Naive thymus-derived CD4-positive, alpha-beta T cell (primary cell): ENCODE measurements at regions of chr10 and their contacts with region 1.

Region 1: GRCh38 chr10:4656576-4657182 is 169.3 kb upstream of the AKR1E2 start:
- DNase-seq: peak in 8 of 9 donors; percentile 16 to 50 (median 36)
- ATAC-seq: no peak
- H3K4me3 ChIP-seq: no peak overlapping the region
- H3K4me3 Mint-ChIP-seq: no peak overlapping the region
- H3K27ac ChIP-seq: no peak overlapping the region
- H3K27ac Mint-ChIP-seq: no peak overlapping the region
- H3K4me1 ChIP-seq: no peaks in the 10 kb centered on the region
- H3K4me1 Mint-ChIP-seq: peaks cover 0 to 11% (median 0%) of the 10 kb centered on the region in 7 donors
- H3K27me3 ChIP-seq: no peaks in the 10 kb centered on the region
- H3K27me3 Mint-ChIP-seq: peaks cover 4 to 30% (median 8%) of the 10 kb centered on the region in 5 donors

Region 2: DNA sequence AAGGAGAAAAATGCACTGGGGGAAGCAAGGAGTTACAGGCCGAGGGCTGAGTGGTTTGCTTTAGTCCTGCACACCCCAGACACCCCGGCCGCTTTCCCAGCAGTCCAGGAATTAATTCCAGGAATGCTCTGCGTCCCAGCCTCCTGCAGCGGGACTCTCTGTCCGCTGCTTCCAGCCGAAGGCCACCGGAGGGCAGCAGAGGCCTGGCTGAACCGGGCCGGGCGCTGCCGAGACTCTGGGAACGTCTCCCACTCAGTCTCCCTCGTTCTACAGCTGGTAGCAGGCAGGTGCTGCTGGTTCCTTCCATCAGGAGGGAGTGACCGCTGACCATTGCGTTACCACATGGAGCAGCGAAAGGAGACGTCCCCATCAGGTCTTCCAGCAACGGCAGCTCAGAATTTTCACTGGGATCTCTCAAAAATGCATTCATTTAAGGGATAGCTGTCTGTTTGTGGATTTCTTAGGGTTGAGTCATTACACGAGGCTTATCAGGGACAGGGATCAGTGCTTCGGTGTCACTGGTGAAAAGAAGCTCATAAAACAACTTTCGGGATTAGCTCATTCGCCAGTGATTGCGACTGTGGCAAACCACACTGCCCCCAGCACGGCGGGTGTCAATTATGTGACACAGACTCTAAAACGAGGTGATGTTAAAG is 1459.2 kb before region 1 on chr10:
- CTCF ChIA-PET with region 1: interaction called, 9 read pairs
- POLR2A ChIA-PET with region 1: no interaction called
- intact Hi-C with region 1: loop called (anchors 1 to 2 kb)
- DNase-seq: peak in 5 of 9 donors; percentile 25 to 82 (median 29)
- ATAC-seq: peak; percentile 72
- H3K4me3 ChIP-seq: peak overlapping the region; percentile 46
- H3K4me3 Mint-ChIP-seq: peak overlapping the region; percentile 56 to 76 (median 72)
- H3K27ac ChIP-seq: no peak overlapping the region
- H3K27ac Mint-ChIP-seq: peak overlapping the region in 1 of 9 donors; percentile 70
- H3K4me1 ChIP-seq: peaks cover 3 to 23% of the 10 kb centered on the region in 2 donors
- H3K4me1 Mint-ChIP-seq: peaks cover 0 to 16% (median 8%) of the 10 kb centered on the region in 7 donors
- H3K27me3 ChIP-seq: no peaks in the 10 kb centered on the region
- H3K27me3 Mint-ChIP-seq: peaks cover 22 to 88% (median 39%) of the 10 kb centered on the region in 5 donors

Region 3: GRCh38 chr10:3435671-3436070 is 1221.0 kb before region 1 on chr10:
- CTCF ChIA-PET with region 1: no interaction called
- POLR2A ChIA-PET with region 1: no interaction called
- intact Hi-C with region 1: loop called in 1 of 2 experiments (anchors 5 kb)
- DNase-seq: no peak
- ATAC-seq: no peak
- H3K4me3 ChIP-seq: no peak overlapping the region
- H3K4me3 Mint-ChIP-seq: no peak overlapping the region
- H3K27ac ChIP-seq: no peak overlapping the region
- H3K27ac Mint-ChIP-seq: no peak overlapping the region
- H3K4me1 ChIP-seq: no peaks in the 10 kb centered on the region
- H3K4me1 Mint-ChIP-seq: peaks cover 0 to 3% (median 0%) of the 10 kb centered on the region in 7 donors
- H3K27me3 ChIP-seq: peaks cover 0 to 3% of the 10 kb centered on the region in 2 donors
- H3K27me3 Mint-ChIP-seq: peaks cover 0 to 18% (median 6%) of the 10 kb centered on the region in 5 donors

Region 4: DNA sequence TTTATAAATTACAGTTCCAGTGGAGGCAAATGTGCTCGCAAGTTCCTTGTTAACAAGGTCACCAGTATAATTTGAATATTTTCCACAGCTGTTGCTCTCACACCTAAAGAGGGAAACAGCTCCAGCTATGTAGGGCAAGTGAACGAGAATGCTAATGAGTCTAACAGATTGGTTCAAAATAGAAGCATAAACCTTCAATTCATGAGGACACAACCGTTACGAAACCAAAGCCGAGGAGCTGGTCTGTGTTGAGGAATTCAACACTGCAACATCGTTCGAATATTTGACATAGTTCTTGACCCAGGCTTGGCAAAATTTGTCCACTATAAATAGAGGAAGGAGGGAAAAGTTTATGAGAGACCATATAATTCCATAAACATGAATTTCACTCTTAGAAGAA is 1032.9 kb before region 1 on chr10:
- CTCF ChIA-PET with region 1: no interaction called
- POLR2A ChIA-PET with region 1: no interaction called
- intact Hi-C with region 1: loop called in 1 of 2 experiments (anchors 5 kb)
- DNase-seq: no peak
- ATAC-seq: no peak
- H3K4me3 ChIP-seq: no peak overlapping the region
- H3K4me3 Mint-ChIP-seq: no peak overlapping the region
- H3K27ac ChIP-seq: no peak overlapping the region
- H3K27ac Mint-ChIP-seq: no peak overlapping the region
- H3K4me1 ChIP-seq: peaks cover 0 to 4% of the 10 kb centered on the region in 2 donors
- H3K4me1 Mint-ChIP-seq: peaks cover 0 to 21% (median 7%) of the 10 kb centered on the region in 7 donors
- H3K27me3 ChIP-seq: no peaks in the 10 kb centered on the region
- H3K27me3 Mint-ChIP-seq: peaks cover 0 to 16% (median 9%) of the 10 kb centered on the region in 5 donors

Region 5: GRCh38 chr10:3935141-3935540 is 721.5 kb before region 1 on chr10:
- CTCF ChIA-PET with region 1: no interaction called
- POLR2A ChIA-PET with region 1: no interaction called
- intact Hi-C with region 1: loop called in 1 of 2 experiments (anchors 10 kb)
- DNase-seq: peak in 6 of 9 donors; percentile 4 to 73 (median 22)
- ATAC-seq: peak; percentile 84
- H3K4me3 ChIP-seq: peak overlapping the region; percentile 32
- H3K4me3 Mint-ChIP-seq: peak overlapping the region; percentile 43 to 83 (median 78)
- H3K27ac ChIP-seq: peak overlapping the region; percentile 43
- H3K27ac Mint-ChIP-seq: peak overlapping the region; percentile 67 to 95 (median 86)
- H3K4me1 ChIP-seq: peaks cover 0 to 5% of the 10 kb centered on the region in 2 donors
- H3K4me1 Mint-ChIP-seq: peaks cover 11 to 61% (median 17%) of the 10 kb centered on the region in 7 donors
- H3K27me3 ChIP-seq: no peaks in the 10 kb centered on the region
- H3K27me3 Mint-ChIP-seq: no peaks in the 10 kb centered on the region

Region 6: GRCh38 chr10:4241724-4242345 is 414.8 kb before region 1 on chr10:
- CTCF ChIA-PET with region 1: no interaction called
- POLR2A ChIA-PET with region 1: no interaction called
- intact Hi-C with region 1: loop called in 1 of 2 experiments (anchors 10 kb)
- DNase-seq: no peak
- ATAC-seq: no peak
- H3K4me3 ChIP-seq: no peak overlapping the region
- H3K4me3 Mint-ChIP-seq: no peak overlapping the region
- H3K27ac ChIP-seq: no peak overlapping the region
- H3K27ac Mint-ChIP-seq: no peak overlapping the region
- H3K4me1 ChIP-seq: no peaks in the 10 kb centered on the region
- H3K4me1 Mint-ChIP-seq: peaks cover 0 to 26% (median 4%) of the 10 kb centered on the region in 7 donors
- H3K27me3 ChIP-seq: no peaks in the 10 kb centered on the region
- H3K27me3 Mint-ChIP-seq: peaks cover 0 to 7% (median 0%) of the 10 kb centered on the region in 5 donors